ENCODE measurements at regions of chr3 and their contacts with region 1.

Region 1: GRCh38 chr3:123028233-123028828 is 768 bp upstream of the SEMA5B start:
- DNase-seq: peak; percentile 58
- H3K4me3 ChIP-seq: peak overlapping the region; percentile 37 to 62 (median 45)
- H3K27ac ChIP-seq: no peak overlapping the region
- H3K4me1 ChIP-seq: peaks cover 18% of the 10 kb centered on the region
- H3K27me3 ChIP-seq: peaks cover 7% of the 10 kb centered on the region
- CTCF ChIP-seq: peak; percentile 26 to 64

Region 2: GRCh38 chr3:122392868-122393844 is 635.2 kb before region 1 on chr3:
- CTCF ChIA-PET with region 1: no interaction called
- dilution Hi-C with region 1: no loop called
- in situ Hi-C with region 1: no loop called
- intact Hi-C with region 1: loop called (anchors 1 kb)
- DNase-seq: peak; percentile 32
- H3K4me3 ChIP-seq: no peak overlapping the region
- H3K27ac ChIP-seq: no peak overlapping the region
- H3K4me1 ChIP-seq: peaks cover 15% of the 10 kb centered on the region
- H3K27me3 ChIP-seq: no peaks in the 10 kb centered on the region
- CTCF ChIP-seq: peak; percentile 73 to 83

Region 3: GRCh38 chr3:122679085-122679881 is 349.0 kb before region 1 on chr3:
- CTCF ChIA-PET with region 1: no interaction called
- dilution Hi-C with region 1: no loop called
- in situ Hi-C with region 1: no loop called
- intact Hi-C with region 1: loop called (anchors 1 kb)
- DNase-seq: peak; percentile 63
- H3K4me3 ChIP-seq: peak overlapping the region; percentile 20 to 83 (median 25)
- H3K27ac ChIP-seq: peak overlapping the region; percentile 44
- H3K4me1 ChIP-seq: peaks cover 26% of the 10 kb centered on the region
- H3K27me3 ChIP-seq: no peaks in the 10 kb centered on the region
- CTCF ChIP-seq: peak; percentile 66 to 82

Region 4: DNA sequence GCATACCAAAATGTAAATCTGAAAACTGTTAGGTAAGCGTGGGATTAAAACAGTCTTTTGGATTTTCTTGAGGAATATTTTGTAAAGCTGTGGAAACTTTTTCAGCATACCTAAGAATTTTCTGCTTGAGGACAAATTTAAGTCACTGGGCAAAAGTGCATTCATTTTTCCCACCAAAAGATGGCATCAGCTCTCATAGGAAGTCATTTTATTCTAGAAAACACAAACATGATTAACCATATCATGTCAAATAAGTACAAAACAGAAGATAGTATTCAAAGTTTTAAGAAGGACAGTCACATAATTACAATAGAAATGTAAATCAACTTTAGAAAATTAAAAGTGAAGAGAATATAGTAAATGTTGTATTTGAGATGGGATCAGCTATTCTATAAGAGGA is 170.0 kb before region 1 on chr3:
- CTCF ChIA-PET with region 1: no interaction called
- dilution Hi-C with region 1: no loop called
- in situ Hi-C with region 1: loop called in 1 of 2 experiments (anchors 25 kb)
- intact Hi-C with region 1: loop called (anchors 1 kb)
- DNase-seq: peak; percentile 32
- H3K4me3 ChIP-seq: no peak overlapping the region
- H3K27ac ChIP-seq: no peak overlapping the region
- H3K4me1 ChIP-seq: no peaks in the 10 kb centered on the region
- H3K27me3 ChIP-seq: no peaks in the 10 kb centered on the region
- CTCF ChIP-seq: peak; percentile 52 to 59

Region 5: DNA sequence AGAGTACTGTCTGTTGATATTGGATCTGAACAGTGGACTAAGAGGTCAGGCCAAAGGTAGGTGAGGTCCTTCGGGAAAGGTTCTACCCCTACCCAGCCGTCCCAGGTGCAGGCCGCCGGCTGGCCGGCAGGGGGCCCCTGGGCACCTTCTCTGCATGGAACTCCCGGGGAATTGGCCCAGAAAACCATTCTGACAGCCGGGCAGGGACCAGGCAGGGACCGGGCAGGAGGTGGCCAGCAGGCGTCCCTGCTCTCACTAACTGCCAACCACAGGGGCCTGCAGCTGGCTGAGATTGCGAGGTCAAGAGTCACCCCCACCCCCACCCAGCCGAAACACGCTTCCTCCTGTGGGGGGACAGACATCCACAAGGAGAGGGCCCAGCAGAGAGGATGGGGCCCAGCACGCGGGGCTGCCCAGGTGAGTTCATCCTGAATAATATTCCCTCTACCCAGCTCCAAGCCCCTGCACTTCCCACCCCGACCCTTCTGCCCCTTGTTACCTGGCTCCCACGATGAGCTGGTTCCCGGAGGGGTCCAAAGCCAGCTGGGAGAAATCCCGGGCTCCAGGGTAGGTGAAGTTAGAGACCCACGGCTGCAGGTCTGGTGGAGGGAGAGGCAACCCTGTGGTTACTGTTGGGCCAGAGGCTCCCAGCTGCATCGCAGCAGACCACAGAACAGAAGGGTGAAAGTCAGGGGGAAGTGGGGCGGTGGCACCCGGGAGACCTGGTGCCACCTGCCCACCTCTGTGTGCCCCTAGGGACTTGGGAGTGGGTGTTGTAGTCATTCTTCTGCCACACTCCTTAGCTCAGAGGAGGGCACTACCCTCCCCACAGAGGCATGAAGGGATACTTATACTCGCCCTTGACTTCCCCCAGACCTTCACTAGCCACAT is 85.1 kb before region 1 on chr3:
- CTCF ChIA-PET with region 1: interaction called, 3 read pairs
- dilution Hi-C with region 1: no loop called
- in situ Hi-C with region 1: no loop called
- intact Hi-C with region 1: loop called (anchors 1 kb)
- DNase-seq: peak; percentile 52
- H3K4me3 ChIP-seq: no peak overlapping the region
- H3K27ac ChIP-seq: no peak overlapping the region
- H3K4me1 ChIP-seq: peaks cover 17% of the 10 kb centered on the region
- H3K27me3 ChIP-seq: no peaks in the 10 kb centered on the region
- CTCF ChIP-seq: peak; percentile 71 to 93

Region 6: DNA sequence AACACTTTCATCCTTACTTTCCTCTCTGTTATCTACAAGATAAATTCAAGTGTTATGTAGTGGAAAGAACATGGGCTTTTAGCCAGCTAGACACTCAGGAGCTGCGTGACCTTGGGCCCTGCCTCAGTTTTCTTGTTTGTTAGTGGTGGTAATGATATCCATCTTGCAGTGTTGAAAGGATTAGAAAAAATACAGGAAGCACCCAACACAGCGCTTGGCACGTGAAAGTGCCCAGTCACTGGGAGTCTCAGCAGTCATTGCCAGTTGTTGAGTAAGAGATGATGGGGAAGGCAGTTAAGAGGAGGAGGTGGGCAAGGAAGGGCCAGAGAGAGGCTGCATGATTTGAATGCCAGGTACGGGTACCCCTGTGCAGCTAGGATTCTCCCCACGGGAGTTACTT is 43.8 kb after region 1 on chr3:
- CTCF ChIA-PET with region 1: interaction called, 10 read pairs
- dilution Hi-C with region 1: no loop called
- in situ Hi-C with region 1: no loop called
- intact Hi-C with region 1: no loop called
- DNase-seq: no peak
- H3K4me3 ChIP-seq: no peak overlapping the region
- H3K27ac ChIP-seq: no peak overlapping the region
- H3K4me1 ChIP-seq: peaks cover 17% of the 10 kb centered on the region
- H3K27me3 ChIP-seq: no peaks in the 10 kb centered on the region
- CTCF ChIP-seq: no peak

Region 7: DNA sequence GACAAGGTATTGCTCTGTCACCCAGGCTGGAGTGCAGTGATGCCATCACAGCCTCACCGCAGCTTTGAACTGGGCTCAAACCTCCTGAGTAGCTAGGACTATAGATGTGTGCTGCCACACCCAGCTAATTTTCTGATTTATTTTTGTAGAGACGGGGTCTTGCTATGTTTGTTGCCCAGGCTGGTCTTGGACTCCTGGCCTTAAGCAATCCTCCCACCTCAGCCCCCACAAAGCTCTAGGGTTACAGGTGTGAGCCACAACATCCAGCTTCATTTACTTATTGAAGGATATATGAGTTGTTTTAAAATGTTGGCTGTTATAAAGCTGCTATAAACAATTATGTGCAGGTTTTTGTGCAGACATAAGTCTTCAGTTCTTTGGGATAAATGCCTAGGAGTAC is 235.6 kb after region 1 on chr3:
- CTCF ChIA-PET with region 1: no interaction called
- dilution Hi-C with region 1: no loop called
- in situ Hi-C with region 1: no loop called
- intact Hi-C with region 1: no loop called
- DNase-seq: no peak
- H3K4me3 ChIP-seq: no peak overlapping the region
- H3K27ac ChIP-seq: no peak overlapping the region
- H3K4me1 ChIP-seq: peaks cover 4% of the 10 kb centered on the region
- H3K27me3 ChIP-seq: no peaks in the 10 kb centered on the region
- CTCF ChIP-seq: no peak

Region 8: GRCh38 chr3:123535580-123535979 is 507.2 kb after region 1 on chr3:
- CTCF ChIA-PET with region 1: no interaction called
- dilution Hi-C with region 1: no loop called
- in situ Hi-C with region 1: no loop called
- intact Hi-C with region 1: no loop called
- DNase-seq: peak; percentile 72
- H3K4me3 ChIP-seq: no peak overlapping the region
- H3K27ac ChIP-seq: peak overlapping the region; percentile 16
- H3K4me1 ChIP-seq: peaks cover 9% of the 10 kb centered on the region
- H3K27me3 ChIP-seq: no peaks in the 10 kb centered on the region
- CTCF ChIP-seq: no peak

Measured in mammary epithelial cell (primary cell).